Natural killer cell (primary cell): ENCODE measurements at regions of chr17 and their contacts with region 1.

Region 1: GRCh38 chr17:30970831-30971567 is at the start of gene RNF135:
- DNase-seq: peak; percentile 52 to 73
- ATAC-seq: peak; percentile 55 to 82 (median 72)
- H3K4me3 ChIP-seq: peak within 1 kb of the TSS; percentile 66
- H3K4me3 Mint-ChIP-seq: peak within 1 kb of the TSS; percentile 99
- H3K27ac ChIP-seq: peak within 1 kb of the TSS; percentile 80
- H3K27ac Mint-ChIP-seq: peak within 1 kb of the TSS; percentile 87 to 96
- H3K4me1 ChIP-seq: peaks cover 45% of the 10 kb centered on the region
- H3K4me1 Mint-ChIP-seq: peaks cover 34 to 41% of the 10 kb centered on the region in 2 donors
- H3K27me3 ChIP-seq: no peaks in the 10 kb centered on the region
- H3K27me3 Mint-ChIP-seq: no peaks in the 10 kb centered on the region
- CTCF ChIP-seq: no peak
- total RNA-seq, gene RNF135: 8.8 to 13.5 (median 11.7) TPM

Region 2: GRCh38 chr17:31008374-31009041 is 37.5 kb after region 1 on chr17:
- intact Hi-C with region 1: no loop called
- DNase-seq: peak; percentile 53 to 68
- ATAC-seq: peak; percentile 79 to 84 (median 84)
- H3K4me3 ChIP-seq: peak overlapping the region; percentile 55
- H3K4me3 Mint-ChIP-seq: peak overlapping the region; percentile 96
- H3K27ac ChIP-seq: peak overlapping the region; percentile 53
- H3K27ac Mint-ChIP-seq: peak overlapping the region; percentile 86 to 93
- H3K4me1 ChIP-seq: peaks cover 10% of the 10 kb centered on the region
- H3K4me1 Mint-ChIP-seq: peaks cover 22 to 40% of the 10 kb centered on the region in 2 donors
- H3K27me3 ChIP-seq: no peaks in the 10 kb centered on the region
- H3K27me3 Mint-ChIP-seq: no peaks in the 10 kb centered on the region
- CTCF ChIP-seq: no peak

Region 3: DNA sequence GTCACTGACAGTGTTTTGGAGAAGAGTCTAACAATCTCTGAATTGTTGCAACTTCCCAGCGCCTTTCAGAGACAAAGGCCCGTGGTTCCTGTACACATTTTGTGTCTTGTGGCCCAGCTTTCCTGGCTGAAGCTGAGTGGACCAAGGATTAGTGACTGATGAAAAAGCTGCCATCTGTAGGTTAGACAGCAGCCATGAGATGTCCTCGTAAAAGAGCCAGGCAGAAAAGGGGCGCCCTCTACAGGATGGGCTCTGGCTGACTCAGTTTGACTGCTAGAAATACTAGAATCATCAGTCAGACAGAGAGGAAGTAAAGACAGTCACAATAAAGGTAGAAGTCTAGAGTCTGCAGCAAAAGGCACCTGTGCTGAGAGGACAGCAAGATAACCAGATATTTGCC is 97.3 kb after region 1 on chr17:
- intact Hi-C with region 1: loop called (anchors 2 kb)
- DNase-seq: peak; percentile 27 to 61
- ATAC-seq: peak; percentile 69 to 89 (median 83)
- H3K4me3 ChIP-seq: no peak overlapping the region
- H3K4me3 Mint-ChIP-seq: no peak overlapping the region
- H3K27ac ChIP-seq: no peak overlapping the region
- H3K27ac Mint-ChIP-seq: no peak overlapping the region
- H3K4me1 ChIP-seq: no peaks in the 10 kb centered on the region
- H3K4me1 Mint-ChIP-seq: no peaks in the 10 kb centered on the region
- H3K27me3 ChIP-seq: no peaks in the 10 kb centered on the region
- H3K27me3 Mint-ChIP-seq: no peaks in the 10 kb centered on the region
- CTCF ChIP-seq: peak; percentile 54

Region 4: GRCh38 chr17:31216053-31216751 is 245.2 kb after region 1 on chr17:
- intact Hi-C with region 1: loop called (anchors 1 kb)
- DNase-seq: peak in 1 of 2 donors; percentile 65
- ATAC-seq: no peak
- H3K4me3 ChIP-seq: no peak overlapping the region
- H3K4me3 Mint-ChIP-seq: no peak overlapping the region
- H3K27ac ChIP-seq: no peak overlapping the region
- H3K27ac Mint-ChIP-seq: no peak overlapping the region
- H3K4me1 ChIP-seq: no peaks in the 10 kb centered on the region
- H3K4me1 Mint-ChIP-seq: no peaks in the 10 kb centered on the region
- H3K27me3 ChIP-seq: no peaks in the 10 kb centered on the region
- H3K27me3 Mint-ChIP-seq: no peaks in the 10 kb centered on the region
- CTCF ChIP-seq: peak; percentile 76